Activated CD8-positive, alpha-beta T cell treated with anti-CD3 and anti-CD28 coated beads for 36 hours (primary cell): ENCODE measurements at regions of chr7 and their contacts with region 1.

Region 1: DNA sequence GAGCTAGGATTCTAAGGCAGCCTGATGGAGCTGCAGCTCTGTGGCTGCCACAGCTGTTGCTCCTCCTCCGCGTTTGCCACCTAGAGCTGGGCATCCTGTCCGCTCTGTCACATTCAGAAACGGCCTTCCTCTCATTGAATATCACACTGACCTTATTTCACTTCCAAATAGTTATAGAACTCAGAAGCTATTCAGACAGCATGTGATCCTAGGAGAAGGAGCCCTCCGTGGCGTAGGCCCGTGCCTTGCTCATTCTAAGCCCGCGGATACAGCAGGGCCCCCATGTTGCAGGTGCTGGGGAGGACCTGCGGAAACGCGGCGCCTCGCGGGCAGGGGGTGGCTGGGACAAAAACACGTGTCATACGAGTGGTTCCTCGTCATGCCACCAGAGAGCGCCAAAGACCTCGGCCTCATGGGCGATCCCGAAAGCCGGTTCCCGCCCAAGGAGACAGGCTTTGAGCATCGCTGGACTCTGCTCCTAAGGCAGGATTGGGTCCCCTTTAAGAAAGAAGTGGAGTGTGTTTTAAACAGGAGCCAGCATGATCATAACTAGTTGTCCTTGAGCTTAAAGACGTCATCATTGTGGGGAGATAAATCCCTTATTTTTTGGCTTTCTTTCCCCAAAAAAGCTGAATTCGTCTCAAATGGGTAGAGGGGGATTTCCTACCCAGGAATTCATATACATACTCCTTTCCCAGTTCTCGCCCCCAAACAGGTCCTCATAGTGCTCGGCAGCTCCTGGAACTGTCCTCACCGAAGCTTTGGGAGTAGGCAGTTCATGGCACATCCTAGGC is 17.9 kb upstream of the FIGNL1 start:
- DNase-seq: peak; percentile 90
- ATAC-seq: peak; percentile 99
- H3K4me3 Mint-ChIP-seq: peak overlapping the region; percentile 52
- H3K27ac Mint-ChIP-seq: peak overlapping the region; percentile 43
- H3K4me1 Mint-ChIP-seq: peaks cover 12% of the 10 kb centered on the region
- H3K27me3 Mint-ChIP-seq: peaks cover 2% of the 10 kb centered on the region
- CTCF ChIP-seq: peak; percentile 97

Region 2: GRCh38 chr7:50397320-50397970 is 70.6 kb before region 1 on chr7:
- CTCF ChIA-PET with region 1: no interaction called
- POLR2A ChIA-PET with region 1: no interaction called
- intact Hi-C with region 1: no loop called
- DNase-seq: peak; percentile 69
- ATAC-seq: peak; percentile 16
- H3K4me3 Mint-ChIP-seq: no peak overlapping the region
- H3K27ac Mint-ChIP-seq: peak overlapping the region; percentile 88
- H3K4me1 Mint-ChIP-seq: peaks cover 81% of the 10 kb centered on the region
- H3K27me3 Mint-ChIP-seq: no peaks in the 10 kb centered on the region
- CTCF ChIP-seq: no peak

Region 3: GRCh38 chr7:50418086-50418515 is 49.9 kb before region 1 on chr7:
- CTCF ChIA-PET with region 1: interaction called, 11 read pairs
- POLR2A ChIA-PET with region 1: no interaction called
- intact Hi-C with region 1: no loop called
- DNase-seq: peak; percentile 90
- ATAC-seq: peak; percentile 93
- H3K4me3 Mint-ChIP-seq: no peak overlapping the region
- H3K27ac Mint-ChIP-seq: no peak overlapping the region
- H3K4me1 Mint-ChIP-seq: peaks cover 26% of the 10 kb centered on the region
- H3K27me3 Mint-ChIP-seq: no peaks in the 10 kb centered on the region
- CTCF ChIP-seq: peak; percentile 90

Region 4: GRCh38 chr7:50486512-50486911 is 18.5 kb after region 1 on chr7:
- CTCF ChIA-PET with region 1: interaction called, 13 read pairs
- POLR2A ChIA-PET with region 1: no interaction called
- intact Hi-C with region 1: no loop called
- DNase-seq: no peak
- ATAC-seq: no peak
- H3K4me3 Mint-ChIP-seq: no peak overlapping the region
- H3K27ac Mint-ChIP-seq: no peak overlapping the region
- H3K4me1 Mint-ChIP-seq: no peaks in the 10 kb centered on the region
- H3K27me3 Mint-ChIP-seq: no peaks in the 10 kb centered on the region
- CTCF ChIP-seq: no peak

Region 5: GRCh38 chr7:50610521-50611277 is 142.7 kb after region 1 on chr7:
- CTCF ChIA-PET with region 1: interaction called, 14 read pairs
- POLR2A ChIA-PET with region 1: no interaction called
- intact Hi-C with region 1: no loop called
- DNase-seq: peak; percentile 80
- ATAC-seq: peak; percentile 83
- H3K4me3 Mint-ChIP-seq: no peak overlapping the region
- H3K27ac Mint-ChIP-seq: no peak overlapping the region
- H3K4me1 Mint-ChIP-seq: peaks cover 32% of the 10 kb centered on the region
- H3K27me3 Mint-ChIP-seq: no peaks in the 10 kb centered on the region
- CTCF ChIP-seq: no peak

Region 6: DNA sequence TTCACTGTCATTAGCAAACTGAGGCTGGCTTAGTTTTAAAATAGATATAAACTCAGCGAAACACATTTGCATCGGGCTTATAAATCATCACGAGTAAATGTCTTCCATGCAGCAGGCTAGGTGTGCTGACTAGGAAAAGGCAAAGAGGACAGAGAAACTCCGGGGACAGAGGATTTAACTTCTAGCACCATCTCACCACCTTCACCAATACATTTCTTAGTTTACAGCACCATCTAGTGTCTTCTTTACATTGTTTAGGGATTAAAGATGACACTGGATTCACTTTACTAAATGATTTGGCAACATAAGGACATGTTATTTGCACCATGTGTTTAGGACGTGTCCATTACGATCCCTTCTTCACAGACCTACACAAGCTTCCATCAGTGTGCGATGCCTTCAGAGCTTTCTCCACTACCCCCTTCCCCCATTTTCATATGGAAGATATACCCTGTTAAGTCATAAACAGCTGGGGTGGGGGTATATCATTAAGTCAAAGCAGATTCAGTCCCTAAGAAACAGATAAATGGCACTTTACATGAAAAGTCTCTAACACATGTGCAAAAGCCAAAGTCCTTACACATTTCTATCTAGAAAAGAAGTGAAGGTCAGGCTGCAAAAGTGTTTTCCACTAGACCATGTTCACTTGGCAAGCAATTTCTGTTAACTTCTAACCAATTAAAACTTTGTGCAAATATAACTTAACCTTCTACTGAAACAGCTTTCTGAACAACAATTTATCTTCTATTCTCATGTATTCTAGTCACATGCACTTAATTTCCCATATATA is 211.4 kb after region 1 on chr7:
- CTCF ChIA-PET with region 1: interaction called, 50 read pairs
- POLR2A ChIA-PET with region 1: no interaction called
- intact Hi-C with region 1: loop called (anchors 5 kb)
- DNase-seq: no peak
- ATAC-seq: peak; percentile 61
- H3K4me3 Mint-ChIP-seq: no peak overlapping the region
- H3K27ac Mint-ChIP-seq: no peak overlapping the region
- H3K4me1 Mint-ChIP-seq: peaks cover 2% of the 10 kb centered on the region
- H3K27me3 Mint-ChIP-seq: peaks cover 4% of the 10 kb centered on the region
- CTCF ChIP-seq: peak; percentile 43

Region 7: GRCh38 chr7:50838675-50839377 is 370.8 kb after region 1 on chr7:
- CTCF ChIA-PET with region 1: no interaction called
- POLR2A ChIA-PET with region 1: no interaction called
- intact Hi-C with region 1: no loop called
- DNase-seq: no peak
- ATAC-seq: no peak
- H3K4me3 Mint-ChIP-seq: no peak overlapping the region
- H3K27ac Mint-ChIP-seq: no peak overlapping the region
- H3K4me1 Mint-ChIP-seq: no peaks in the 10 kb centered on the region
- H3K27me3 Mint-ChIP-seq: peaks cover 24% of the 10 kb centered on the region
- CTCF ChIP-seq: no peak

Region 8: DNA sequence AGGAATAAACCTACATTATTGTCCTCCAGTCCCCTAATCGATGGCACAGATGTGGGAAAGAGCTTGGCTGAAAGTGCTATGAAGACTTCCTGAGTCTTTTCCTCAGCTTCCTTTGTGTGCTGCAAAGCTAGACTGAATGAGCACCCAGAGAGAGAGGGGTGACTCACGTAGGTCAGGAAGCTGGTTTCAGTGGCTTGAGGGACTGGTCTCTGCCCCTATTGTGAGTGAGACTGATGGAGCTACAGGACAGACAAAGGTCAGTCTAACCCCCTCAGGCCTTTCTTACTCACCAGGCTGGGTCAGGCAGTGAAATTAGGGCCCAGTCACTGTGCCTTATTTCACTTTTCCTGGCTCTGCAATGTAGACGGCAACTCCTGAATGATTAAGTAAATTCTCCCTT is 485.8 kb after region 1 on chr7:
- CTCF ChIA-PET with region 1: no interaction called
- POLR2A ChIA-PET with region 1: no interaction called
- intact Hi-C with region 1: no loop called
- DNase-seq: no peak
- ATAC-seq: no peak
- H3K4me3 Mint-ChIP-seq: no peak overlapping the region
- H3K27ac Mint-ChIP-seq: no peak overlapping the region
- H3K4me1 Mint-ChIP-seq: no peaks in the 10 kb centered on the region
- H3K27me3 Mint-ChIP-seq: no peaks in the 10 kb centered on the region
- CTCF ChIP-seq: no peak

Region 9: DNA sequence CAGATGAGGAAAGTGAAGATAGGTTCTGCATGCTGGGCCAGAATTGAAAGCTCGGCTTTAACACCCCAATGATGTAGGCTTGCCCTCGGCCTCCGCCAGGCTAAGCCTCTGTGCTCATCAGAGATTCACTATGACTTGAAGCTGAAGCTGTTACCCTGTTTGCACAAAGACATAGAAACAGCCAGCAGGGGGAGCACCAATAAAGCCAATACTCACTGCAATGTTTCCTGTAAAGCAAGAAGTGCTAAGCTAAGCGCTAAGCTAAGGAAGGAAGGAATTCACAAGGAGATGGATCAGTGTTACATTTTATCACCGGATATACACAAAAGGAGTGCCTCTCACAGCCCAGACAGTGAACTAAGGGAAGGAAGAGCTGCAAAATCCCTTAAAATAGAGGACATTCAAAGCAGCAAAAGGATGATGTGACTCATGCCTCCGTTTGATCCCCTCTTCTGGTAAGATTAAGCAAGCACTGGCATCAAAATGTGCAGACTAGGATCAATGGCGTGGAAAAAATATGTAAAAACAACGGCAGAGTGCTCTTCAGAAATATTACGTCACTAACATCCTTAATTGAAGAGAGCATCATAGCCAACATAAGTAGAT is 694.8 kb after region 1 on chr7:
- CTCF ChIA-PET with region 1: interaction called, 48 read pairs
- POLR2A ChIA-PET with region 1: no interaction called
- intact Hi-C with region 1: no loop called
- DNase-seq: peak; percentile 88
- ATAC-seq: peak; percentile 94
- H3K4me3 Mint-ChIP-seq: no peak overlapping the region
- H3K27ac Mint-ChIP-seq: no peak overlapping the region
- H3K4me1 Mint-ChIP-seq: peaks cover 6% of the 10 kb centered on the region
- H3K27me3 Mint-ChIP-seq: peaks cover 11% of the 10 kb centered on the region
- CTCF ChIP-seq: peak; percentile 62